Sciatic nerve (tissue), 2 donors: ENCODE measurements at regions of chr11 and their contacts with region 1.

Region 1: DNA sequence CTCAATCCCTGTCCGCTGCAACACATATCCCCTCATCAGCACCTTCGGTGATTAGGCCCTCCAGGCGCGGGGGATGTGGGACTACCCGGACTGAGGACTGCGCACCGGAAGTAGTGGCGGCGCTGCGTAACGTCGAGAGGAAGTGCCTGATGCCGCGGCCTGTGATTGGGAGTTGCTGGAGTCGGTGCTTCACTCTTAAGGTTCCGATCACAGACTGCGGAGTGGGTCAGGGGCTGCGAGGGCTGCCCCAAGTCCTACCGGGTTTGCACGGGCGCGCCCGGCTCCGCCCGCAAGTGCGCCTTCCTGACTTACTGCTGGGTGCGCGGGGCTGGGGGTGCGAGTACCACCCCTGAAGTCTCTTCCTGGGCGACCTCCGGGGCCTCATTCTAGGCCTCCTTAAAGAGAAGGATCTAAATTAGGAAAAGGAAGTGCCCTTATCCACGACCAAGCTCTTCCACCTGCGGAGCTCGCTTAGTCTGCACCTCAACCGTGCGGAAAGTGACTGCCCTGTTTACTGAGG is at the start of gene ALKBH3:
- DNase-seq: peak; percentile 94
- ATAC-seq: peak; percentile 100
- total RNA-seq, gene ALKBH3: 32.7 TPM

Region 2: DNA sequence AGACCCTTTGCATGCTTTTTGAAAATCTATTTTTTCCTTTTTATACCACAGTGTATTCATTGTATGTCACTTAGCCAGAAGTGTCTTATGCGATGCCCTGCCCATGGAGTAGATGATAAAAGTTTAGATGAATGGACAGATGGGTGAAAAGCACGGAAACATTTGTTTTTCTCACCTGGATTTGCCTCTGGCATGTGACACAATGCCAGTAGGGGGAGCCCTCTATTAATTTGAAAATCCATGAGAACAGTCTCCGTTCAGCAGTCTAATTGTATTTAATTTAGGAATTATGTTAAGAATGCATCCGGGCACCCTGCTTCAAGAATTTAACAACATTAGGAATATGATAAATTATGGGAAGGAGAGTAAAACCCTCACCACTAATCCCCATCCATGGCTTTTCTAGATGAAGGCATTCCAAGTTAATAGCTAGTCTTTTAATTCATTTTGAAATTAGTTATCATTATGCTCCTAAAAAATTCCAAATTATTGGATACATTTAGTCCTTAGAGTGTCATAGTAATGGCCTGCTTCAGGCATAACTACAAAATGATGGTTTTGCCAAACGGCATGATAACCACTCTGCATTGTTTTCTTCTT is 55.4 kb before region 1 on chr11:
- intact Hi-C with region 1: loop called (anchors 2 kb)
- DNase-seq: no peak
- ATAC-seq: no peak

Region 3: DNA sequence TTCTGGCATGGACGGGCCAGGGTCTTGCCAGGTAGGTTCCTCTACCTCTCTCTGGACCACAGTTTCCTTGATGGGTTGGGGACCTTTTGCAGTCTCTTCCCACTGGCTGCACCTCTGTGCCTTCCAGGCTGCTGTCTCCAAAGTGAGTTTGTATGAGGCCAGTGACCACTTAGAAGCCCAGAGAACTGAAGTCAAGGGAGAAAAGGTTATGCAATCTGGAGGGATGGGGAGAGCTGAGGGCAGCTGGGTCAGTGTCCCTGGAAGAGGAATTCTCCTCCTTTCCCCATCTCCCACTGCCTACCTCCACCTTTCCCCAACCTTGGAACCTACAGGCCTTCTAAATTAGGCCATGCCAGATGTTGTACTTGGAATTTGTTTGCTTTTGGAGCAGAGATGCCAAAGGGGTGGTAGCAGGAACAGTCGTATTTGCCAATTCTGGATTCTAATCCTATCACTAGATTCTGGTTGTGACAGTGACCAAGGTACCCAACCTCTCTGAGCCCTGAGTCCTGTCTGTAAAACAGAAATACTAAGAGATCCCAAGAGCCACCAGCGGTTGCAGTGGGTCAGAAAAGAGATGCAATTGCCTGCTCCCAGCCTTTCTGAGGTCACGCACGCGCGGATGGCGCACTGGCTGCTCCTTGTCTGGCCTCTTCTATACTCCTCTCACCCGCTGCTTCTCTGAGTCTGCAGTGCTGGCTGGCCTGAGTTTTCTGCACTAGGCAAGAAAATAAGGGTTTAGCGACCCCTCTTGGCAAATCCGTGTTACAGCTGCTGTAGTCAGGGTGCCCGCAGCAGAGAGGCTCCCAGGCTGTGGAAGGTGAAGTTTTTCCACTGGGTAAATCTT is 156.3 kb after region 1 on chr11:
- intact Hi-C with region 1: loop called (anchors 5 kb)
- DNase-seq: peak; percentile 89
- ATAC-seq: peak; percentile 98